PC-9 (cell line): ENCODE measurements at regions of chr19 and their contacts with region 1.

Region 1: GRCh38 chr19:39765091-39766076 is 13.3 kb upstream of the LEUTX start:
- DNase-seq: peak in 1 of 2 experiments; percentile 21
- H3K4me3 ChIP-seq: no peak overlapping the region
- H3K27ac ChIP-seq: no peak overlapping the region
- H3K4me1 ChIP-seq: no peaks in the 10 kb centered on the region
- H3K27me3 ChIP-seq: peaks cover 48% of the 10 kb centered on the region
- CTCF ChIP-seq: peak; percentile 87

Region 2: GRCh38 chr19:39557441-39558151 is 207.8 kb before region 1 on chr19:
- CTCF ChIA-PET with region 1: no interaction called
- POLR2A ChIA-PET with region 1: no interaction called
- intact Hi-C with region 1: loop called (anchors 5 kb)
- DNase-seq: peak; percentile 44 to 75
- H3K4me3 ChIP-seq: no peak overlapping the region
- H3K27ac ChIP-seq: no peak overlapping the region
- H3K4me1 ChIP-seq: peaks cover 10% of the 10 kb centered on the region; the same call in 1 of the 2 replicates
- H3K27me3 ChIP-seq: peaks cover 34% of the 10 kb centered on the region
- CTCF ChIP-seq: no peak